B cell (primary cell): ENCODE measurements at regions of chr21 and their contacts with region 1.

Region 1: GRCh38 chr21:14215971-14216641 is at the start of gene RBM11:
- DNase-seq: peak; percentile 87
- ATAC-seq: peak; percentile 98
- H3K4me3 ChIP-seq: peak within 1 kb of the TSS; percentile 44 to 82 (median 72)
- H3K4me3 Mint-ChIP-seq: peak within 1 kb of the TSS; percentile 89
- H3K27ac ChIP-seq: peak within 1 kb of the TSS in 1 of 2 donors; percentile 20
- H3K27ac Mint-ChIP-seq: peak within 1 kb of the TSS; percentile 67
- H3K4me1 ChIP-seq: peaks cover 8 to 12% of the 10 kb centered on the region in 2 donors
- H3K4me1 Mint-ChIP-seq: peaks cover 7% of the 10 kb centered on the region
- H3K27me3 ChIP-seq: peaks cover 0 to 7% (median 3%) of the 10 kb centered on the region in 4 experiments
- H3K27me3 Mint-ChIP-seq: peaks cover 11% of the 10 kb centered on the region
- CTCF ChIP-seq: no peak
- total RNA-seq, gene RBM11: 3.0 and 3.4 TPM in 2 replicates

Region 2: GRCh38 chr21:14116080-14116481 is 100.0 kb before region 1 on chr21:
- CTCF ChIA-PET with region 1: no interaction called
- POLR2A ChIA-PET with region 1: no interaction called
- intact Hi-C with region 1: loop called (anchors 10 kb)
- DNase-seq: peak; percentile 67
- ATAC-seq: peak; percentile 89
- H3K4me3 ChIP-seq: peak overlapping the region in 3 of 5 experiments; percentile 13 to 33 (median 18)
- H3K4me3 Mint-ChIP-seq: peak overlapping the region; percentile 73
- H3K27ac ChIP-seq: peak overlapping the region; percentile 69 to 73
- H3K27ac Mint-ChIP-seq: peak overlapping the region; percentile 88
- H3K4me1 ChIP-seq: peaks cover 25 to 31% of the 10 kb centered on the region in 2 donors
- H3K4me1 Mint-ChIP-seq: peaks cover 31% of the 10 kb centered on the region
- H3K27me3 ChIP-seq: no peaks in the 10 kb centered on the region
- H3K27me3 Mint-ChIP-seq: no peaks in the 10 kb centered on the region
- CTCF ChIP-seq: no peak

Region 3: GRCh38 chr21:14382835-14383594 is 166.9 kb after region 1 on chr21 and contains the start of gene HSPA13:
- CTCF ChIA-PET with region 1: no interaction called
- POLR2A ChIA-PET with region 1: no interaction called
- intact Hi-C with region 1: loop called (anchors 1 kb)
- DNase-seq: peak; percentile 100
- ATAC-seq: peak; percentile 93
- H3K4me3 ChIP-seq: peak within 1 kb of the TSS; percentile 85 to 95 (median 88)
- H3K4me3 Mint-ChIP-seq: peak within 1 kb of the TSS; percentile 100
- H3K27ac ChIP-seq: peak within 1 kb of the TSS; percentile 91 to 96
- H3K27ac Mint-ChIP-seq: peak within 1 kb of the TSS; percentile 98
- H3K4me1 ChIP-seq: peaks cover 10 to 11% of the 10 kb centered on the region in 2 donors
- H3K4me1 Mint-ChIP-seq: peaks cover 37% of the 10 kb centered on the region
- H3K27me3 ChIP-seq: no peaks in the 10 kb centered on the region
- H3K27me3 Mint-ChIP-seq: no peaks in the 10 kb centered on the region
- CTCF ChIP-seq: no peak
- total RNA-seq, gene HSPA13: 19.1 and 19.3 TPM in 2 replicates

Region 4: GRCh38 chr21:14858311-14858710 is 642.2 kb after region 1 on chr21:
- CTCF ChIA-PET with region 1: no interaction called
- POLR2A ChIA-PET with region 1: no interaction called
- intact Hi-C with region 1: no loop called
- DNase-seq: no peak
- ATAC-seq: no peak
- H3K4me3 ChIP-seq: no peak overlapping the region
- H3K4me3 Mint-ChIP-seq: no peak overlapping the region
- H3K27ac ChIP-seq: no peak overlapping the region
- H3K27ac Mint-ChIP-seq: no peak overlapping the region
- H3K4me1 ChIP-seq: peaks cover 0 to 3% of the 10 kb centered on the region in 2 donors
- H3K4me1 Mint-ChIP-seq: peaks cover 23% of the 10 kb centered on the region
- H3K27me3 ChIP-seq: no peaks in the 10 kb centered on the region
- H3K27me3 Mint-ChIP-seq: no peaks in the 10 kb centered on the region
- CTCF ChIP-seq: no peak